K562 (cell line): ENCODE measurements at regions of chr2 and their contacts with region 1.

Region 1: GRCh38 chr2:53970724-53971602 is at the start of gene PSME4:
- DNase-seq: peak; percentile 90 to 93 (median 92)
- ATAC-seq: peak; percentile 87
- H3K4me3 ChIP-seq: peak within 1 kb of the TSS; percentile 95
- H3K27ac ChIP-seq: peak within 1 kb of the TSS; percentile 96
- H3K4me1 ChIP-seq: peaks cover 4 to 18% of the 10 kb centered on the region in 2 experiments; a peak in 4 of 5 replicates
- H3K27me3 ChIP-seq: no peaks in the 10 kb centered on the region
- CTCF ChIP-seq: no peak
- EP300 ChIP-seq: no peak
- POLR2A ChIP-seq: peak; percentile 81
- RAD21 ChIP-seq: no peak
- polyA plus RNA-seq, gene PSME4: 24.3 to 33.3 TPM

Region 2: GRCh38 chr2:53813151-53813550 is 157.8 kb before region 1 on chr2:
- CTCF ChIA-PET with region 1: no interaction called
- POLR2A ChIA-PET with region 1: no interaction called
- in situ Hi-C with region 1: no loop called
- intact Hi-C with region 1: no loop called
- DNase-seq: no peak
- ATAC-seq: no peak
- H3K4me3 ChIP-seq: no peak overlapping the region
- H3K27ac ChIP-seq: no peak overlapping the region
- H3K4me1 ChIP-seq: no peaks in the 10 kb centered on the region
- H3K27me3 ChIP-seq: no peaks in the 10 kb centered on the region
- CTCF ChIP-seq: no peak
- EP300 ChIP-seq: no peak
- POLR2A ChIP-seq: no peak
- RAD21 ChIP-seq: no peak

Region 3: DNA sequence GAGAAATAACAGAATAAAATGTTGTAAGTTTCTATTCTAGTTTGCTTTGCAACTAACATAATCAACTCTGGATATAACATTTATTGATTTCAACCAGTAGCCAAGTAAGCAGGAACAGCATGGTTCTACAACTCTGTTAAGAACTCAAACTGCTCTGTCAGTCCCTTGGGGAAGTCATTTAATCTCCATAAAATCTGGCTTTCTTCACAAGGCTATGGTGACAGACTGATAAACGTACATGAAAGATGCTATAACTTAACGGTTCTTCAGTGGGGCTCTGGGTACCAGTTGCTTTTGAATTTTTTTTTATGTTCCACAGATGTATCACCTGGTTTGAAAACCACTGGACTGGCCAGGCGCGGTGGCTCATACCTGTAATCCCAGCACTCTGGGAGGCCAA is 10.5 kb before region 1 on chr2:
- CTCF ChIA-PET with region 1: no interaction called
- POLR2A ChIA-PET with region 1: interaction called, 65 read pairs
- in situ Hi-C with region 1: no loop called
- intact Hi-C with region 1: no loop called
- DNase-seq: no peak
- ATAC-seq: 0 out of 3 replicates have a peak, but pooled peaks have one; percentile 10
- H3K4me3 ChIP-seq: no peak overlapping the region
- H3K27ac ChIP-seq: no peak overlapping the region
- H3K4me1 ChIP-seq: peaks cover 6 to 10% of the 10 kb centered on the region in 2 experiments; a peak in 3 of 5 replicates
- H3K27me3 ChIP-seq: no peaks in the 10 kb centered on the region
- CTCF ChIP-seq: no peak
- EP300 ChIP-seq: no peak
- POLR2A ChIP-seq: no peak
- RAD21 ChIP-seq: no peak

Region 4: GRCh38 chr2:54074606-54075341 is 103.8 kb after region 1 on chr2:
- CTCF ChIA-PET with region 1: no interaction called
- POLR2A ChIA-PET with region 1: interaction called, 3 read pairs
- in situ Hi-C with region 1: no loop called
- intact Hi-C with region 1: loop called (anchors 5 kb)
- DNase-seq: no peak
- ATAC-seq: no peak
- H3K4me3 ChIP-seq: no peak overlapping the region
- H3K27ac ChIP-seq: no peak overlapping the region; the same call in 2 of the 3 replicates
- H3K4me1 ChIP-seq: peaks cover 0 to 26% of the 10 kb centered on the region in 2 experiments; a peak in 3 of 5 replicates
- H3K27me3 ChIP-seq: no peaks in the 10 kb centered on the region
- CTCF ChIP-seq: no peak
- EP300 ChIP-seq: no peak
- POLR2A ChIP-seq: no peak
- RAD21 ChIP-seq: no peak